ENCODE measurements at regions of chr5 and their contacts with region 1.

Region 1: GRCh38 chr5:154368041-154368800 is 77.6 kb upstream of the SAP30L start:
- DNase-seq: peak; percentile 12
- H3K4me3 ChIP-seq: no peak overlapping the region
- H3K27ac ChIP-seq: no peak overlapping the region
- H3K4me1 ChIP-seq: no peaks in the 10 kb centered on the region
- H3K27me3 ChIP-seq: no peaks in the 10 kb centered on the region
- CTCF ChIP-seq: no peak
- POLR2A ChIP-seq: no peak

Region 2: DNA sequence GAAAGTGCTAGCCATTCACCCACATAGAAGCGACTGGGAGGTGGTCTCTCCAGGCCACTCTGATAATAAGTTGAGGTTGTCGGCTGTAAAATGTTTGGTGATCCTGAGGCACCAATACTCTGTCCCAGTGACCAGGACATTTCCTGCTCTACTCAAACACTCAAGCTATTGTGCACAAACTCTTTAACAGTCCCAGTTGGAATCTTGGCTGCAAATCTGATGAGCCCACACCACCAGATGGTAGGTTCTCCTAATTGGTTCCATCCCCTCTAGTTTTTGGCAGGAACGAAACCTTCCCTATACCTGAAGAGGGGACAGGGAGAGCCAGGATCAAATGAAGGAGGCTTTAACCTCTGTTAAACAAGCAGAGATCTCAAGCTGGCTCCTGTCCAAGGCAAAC is 863.5 kb before region 1 on chr5:
- intact Hi-C with region 1: no loop called
- DNase-seq: no peak
- H3K4me3 ChIP-seq: no peak overlapping the region
- H3K27ac ChIP-seq: no peak overlapping the region
- H3K4me1 ChIP-seq: no peaks in the 10 kb centered on the region
- H3K27me3 ChIP-seq: no peaks in the 10 kb centered on the region
- CTCF ChIP-seq: no peak
- POLR2A ChIP-seq: no peak

Region 3: DNA sequence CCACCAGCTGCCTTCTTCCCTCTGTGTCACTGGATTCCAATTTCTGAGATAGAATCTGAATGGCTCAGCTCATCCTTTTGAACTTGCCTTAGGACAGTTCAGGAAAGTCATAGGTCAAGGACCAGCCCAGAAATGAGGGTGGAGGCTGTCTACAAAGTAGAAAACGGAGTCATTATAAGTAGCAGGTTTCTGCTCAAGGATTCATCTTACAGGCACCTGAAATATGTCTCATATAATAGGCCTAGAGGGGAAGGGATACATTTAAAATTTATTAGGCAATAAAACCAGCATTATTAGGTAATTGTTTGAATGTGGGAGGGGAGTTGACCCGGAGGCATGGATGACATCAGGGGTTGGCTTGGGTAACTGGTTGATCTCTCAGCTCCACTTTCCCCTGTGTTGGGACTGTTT is 189.6 kb before region 1 on chr5:
- intact Hi-C with region 1: no loop called
- DNase-seq: peak; percentile 44
- H3K4me3 ChIP-seq: no peak overlapping the region
- H3K27ac ChIP-seq: no peak overlapping the region
- H3K4me1 ChIP-seq: no peaks in the 10 kb centered on the region
- H3K27me3 ChIP-seq: no peaks in the 10 kb centered on the region
- CTCF ChIP-seq: no peak
- POLR2A ChIP-seq: no peak

Region 4: DNA sequence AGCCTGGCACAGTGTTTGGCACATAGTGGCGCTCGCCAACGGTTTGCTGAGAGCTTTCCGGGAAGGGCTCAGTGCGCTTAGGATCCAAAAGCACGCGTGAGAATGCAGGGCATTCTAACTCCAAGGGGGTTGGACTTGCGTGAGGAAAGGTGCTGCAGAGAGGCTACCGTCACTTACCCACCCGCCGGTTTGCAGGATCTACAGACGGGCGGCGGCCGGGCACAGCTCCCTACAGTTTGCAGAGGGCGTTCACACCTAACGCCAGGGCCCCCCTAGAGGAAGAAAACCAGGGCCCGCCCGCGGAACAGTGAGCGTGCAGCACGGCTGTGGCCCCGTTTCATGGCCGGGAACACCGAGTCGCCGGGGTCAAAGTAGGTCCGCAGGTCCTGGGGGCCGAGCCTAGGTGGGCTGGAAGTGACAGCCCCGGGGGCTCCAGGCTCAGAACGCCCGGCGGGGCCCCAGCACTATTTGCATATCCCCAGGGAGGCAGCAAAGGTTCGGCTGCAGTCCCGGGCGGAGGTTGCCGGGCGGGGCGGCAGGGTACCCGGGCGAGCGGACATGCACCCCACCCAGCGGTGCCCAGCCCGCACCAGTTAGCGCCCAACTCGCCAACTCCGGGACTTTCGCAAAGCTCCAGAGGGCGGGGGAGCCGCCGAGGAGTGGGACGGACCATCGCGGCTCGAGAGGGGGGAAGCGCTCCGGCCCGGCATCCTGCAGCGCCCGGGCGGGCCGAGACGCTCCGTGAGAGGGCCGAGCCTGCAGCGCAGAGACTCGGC is 178.2 kb before region 1 on chr5:
- intact Hi-C with region 1: loop called (anchors 2 kb)
- DNase-seq: peak; percentile 68
- H3K4me3 ChIP-seq: peak overlapping the region; percentile 80 to 83
- H3K27ac ChIP-seq: peak overlapping the region; percentile 62 to 64
- H3K4me1 ChIP-seq: no peaks in the 10 kb centered on the region
- H3K27me3 ChIP-seq: no peaks in the 10 kb centered on the region
- CTCF ChIP-seq: peak in 1 of 4 experiments; percentile 23
- POLR2A ChIP-seq: peak; percentile 15

Region 5: GRCh38 chr5:154260224-154260927 is 107.8 kb before region 1 on chr5:
- intact Hi-C with region 1: no loop called
- DNase-seq: no peak
- H3K4me3 ChIP-seq: no peak overlapping the region
- H3K27ac ChIP-seq: no peak overlapping the region
- H3K4me1 ChIP-seq: no peaks in the 10 kb centered on the region
- H3K27me3 ChIP-seq: no peaks in the 10 kb centered on the region
- CTCF ChIP-seq: no peak
- POLR2A ChIP-seq: no peak

Region 6: DNA sequence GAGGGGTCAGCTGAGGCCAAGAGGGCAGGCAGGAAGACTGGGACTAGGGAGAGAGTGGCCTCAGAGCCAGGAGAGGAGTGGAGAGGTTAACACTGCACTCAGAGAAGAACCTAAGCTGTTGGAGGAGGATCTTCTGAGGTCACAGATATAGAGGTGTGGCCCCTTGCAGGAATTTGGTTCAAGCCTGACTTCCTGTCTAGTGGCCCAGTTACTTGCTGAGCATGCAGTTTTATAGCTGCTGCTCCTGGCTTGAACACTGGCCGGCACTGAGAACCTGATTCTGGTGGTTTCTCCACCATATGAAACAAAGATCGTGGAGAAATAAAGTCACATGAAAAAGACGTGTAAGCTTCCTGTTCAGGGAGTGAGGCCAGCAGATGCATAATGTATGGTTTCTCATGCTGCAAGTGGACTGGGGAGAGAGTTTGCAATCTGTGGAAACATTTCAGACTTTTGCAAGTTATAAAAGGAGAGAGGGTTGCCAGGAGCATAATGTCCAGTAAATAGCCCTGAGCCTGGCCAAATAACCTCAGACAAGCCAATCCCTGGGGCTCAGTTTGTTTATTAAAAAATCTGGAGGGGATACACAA is 95.1 kb before region 1 on chr5:
- intact Hi-C with region 1: loop called (anchors 10 kb)
- DNase-seq: no peak
- H3K4me3 ChIP-seq: no peak overlapping the region
- H3K27ac ChIP-seq: no peak overlapping the region
- H3K4me1 ChIP-seq: no peaks in the 10 kb centered on the region
- H3K27me3 ChIP-seq: no peaks in the 10 kb centered on the region
- CTCF ChIP-seq: no peak
- POLR2A ChIP-seq: no peak

Region 7: DNA sequence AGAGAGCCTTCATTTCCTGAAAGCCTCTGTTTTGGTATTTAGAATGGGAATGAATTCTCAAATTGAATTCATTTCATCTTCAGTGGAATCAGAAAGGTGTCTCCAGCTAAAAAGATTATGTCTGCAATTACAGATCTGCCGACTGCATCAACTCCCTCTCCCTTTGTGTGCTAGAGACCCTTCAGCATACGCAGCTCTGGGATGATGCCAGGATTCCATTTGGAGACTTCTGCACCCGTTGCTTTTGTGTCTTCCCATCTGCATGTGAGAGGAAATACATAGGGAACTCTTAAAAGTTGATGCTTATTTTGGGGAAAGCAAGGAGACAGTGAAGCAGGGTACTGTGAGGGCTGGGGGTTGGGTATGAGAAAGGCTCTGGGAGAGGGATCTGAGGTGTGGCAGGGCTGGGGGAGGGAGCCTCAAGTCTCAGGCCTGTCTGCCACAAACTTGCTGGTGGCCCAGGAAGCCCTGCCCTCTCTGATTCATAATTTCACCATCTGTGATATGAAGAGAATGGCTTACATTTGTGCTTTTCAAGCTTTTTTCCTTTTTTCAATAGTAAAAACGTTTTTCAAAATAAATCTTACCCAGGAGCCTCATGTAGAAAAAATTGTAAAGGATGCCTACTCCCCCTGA is 12.1 kb before region 1 on chr5:
- intact Hi-C with region 1: no loop called
- DNase-seq: no peak
- H3K4me3 ChIP-seq: no peak overlapping the region
- H3K27ac ChIP-seq: no peak overlapping the region
- H3K4me1 ChIP-seq: no peaks in the 10 kb centered on the region
- H3K27me3 ChIP-seq: no peaks in the 10 kb centered on the region
- CTCF ChIP-seq: no peak
- POLR2A ChIP-seq: no peak

Measured in prostate gland (tissue), 2 donors.